Sigmoid colon (tissue), 7 donors: ENCODE measurements at regions of chr10 and their contacts with region 1.

Region 1: DNA sequence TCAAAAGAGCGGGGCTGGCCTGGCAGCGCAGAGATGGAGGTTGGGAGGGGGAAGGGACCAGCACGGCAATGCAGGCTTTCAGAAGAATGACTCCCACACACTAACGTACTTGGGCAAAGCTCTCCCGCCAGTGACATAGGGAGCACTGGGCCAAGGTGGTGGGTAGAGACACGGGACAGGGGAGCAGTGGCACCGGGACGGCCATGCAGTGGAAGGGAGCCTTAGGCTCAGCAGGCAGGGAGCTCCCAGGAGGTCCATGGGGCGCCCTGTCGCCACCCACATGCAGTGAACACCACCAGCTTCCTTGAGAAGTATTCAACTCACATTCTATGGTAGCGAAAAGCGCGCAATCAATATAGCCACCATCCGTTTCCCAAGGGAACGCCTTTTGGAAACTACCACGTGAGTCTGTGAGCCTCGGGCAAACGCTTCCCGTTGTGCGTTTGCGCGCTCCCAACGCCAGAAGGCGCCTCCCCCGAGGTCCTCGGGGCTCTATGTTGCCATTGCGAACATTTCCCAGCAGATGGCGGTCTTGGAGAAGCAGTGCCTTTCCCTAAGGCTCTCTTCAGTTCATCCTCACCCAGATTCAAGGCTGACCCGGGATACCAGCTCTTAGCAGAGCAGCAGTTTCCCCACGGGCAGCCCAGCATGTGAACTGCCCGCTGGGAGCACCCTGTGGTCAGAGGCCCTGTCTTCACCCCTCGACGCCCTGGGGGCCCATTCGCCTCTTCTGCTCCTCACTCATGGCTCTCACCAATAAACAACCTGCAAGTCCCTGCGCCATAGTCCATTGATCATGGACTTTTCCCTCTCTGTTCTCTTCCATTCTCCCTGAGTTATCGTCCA is 16.4 kb upstream of the OPALIN start:
- DNase-seq: peak; percentile 93
- H3K4me3 ChIP-seq: peak overlapping the region; percentile 21 to 46 (median 43)
- H3K27ac ChIP-seq: no peak overlapping the region
- H3K4me1 ChIP-seq: peaks cover 0 to 52% (median 48%) of the 10 kb centered on the region in 4 donors
- H3K27me3 ChIP-seq: no peaks in the 10 kb centered on the region
- CTCF ChIP-seq: peak; percentile 92 to 99 (median 96)
- EP300 ChIP-seq: no peak
- POLR2A ChIP-seq: no peak

Region 2: GRCh38 chr10:95588025-95588424 is 787.2 kb before region 1 on chr10:
- intact Hi-C with region 1: no loop called
- DNase-seq: no peak
- H3K4me3 ChIP-seq: no peak overlapping the region
- H3K27ac ChIP-seq: no peak overlapping the region
- H3K4me1 ChIP-seq: no peaks in the 10 kb centered on the region
- H3K27me3 ChIP-seq: no peaks in the 10 kb centered on the region
- CTCF ChIP-seq: no peak
- EP300 ChIP-seq: no peak
- POLR2A ChIP-seq: no peak

Region 3: DNA sequence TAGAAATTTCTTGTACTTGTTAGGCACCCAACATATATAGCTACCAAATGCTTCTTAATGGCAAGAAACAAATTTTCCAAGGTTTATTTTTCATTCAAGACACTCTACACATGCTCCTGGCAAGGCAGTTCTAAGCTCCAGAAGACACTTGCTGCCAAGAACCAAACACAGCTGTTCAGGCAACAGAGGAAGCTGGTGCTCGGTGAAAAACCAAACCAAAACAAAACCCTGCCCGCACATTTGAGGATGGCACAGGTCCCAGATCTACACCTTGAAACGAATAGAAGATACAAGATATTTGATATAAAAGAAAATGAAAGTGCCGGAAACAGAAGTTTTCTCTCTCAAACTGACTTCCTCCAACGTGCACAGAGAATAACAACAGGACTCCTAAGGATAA is 75.8 kb before region 1 on chr10:
- intact Hi-C with region 1: no loop called
- DNase-seq: no peak
- H3K4me3 ChIP-seq: no peak overlapping the region
- H3K27ac ChIP-seq: no peak overlapping the region
- H3K4me1 ChIP-seq: no peaks in the 10 kb centered on the region
- H3K27me3 ChIP-seq: no peaks in the 10 kb centered on the region
- CTCF ChIP-seq: no peak
- EP300 ChIP-seq: no peak
- POLR2A ChIP-seq: no peak

Region 4: DNA sequence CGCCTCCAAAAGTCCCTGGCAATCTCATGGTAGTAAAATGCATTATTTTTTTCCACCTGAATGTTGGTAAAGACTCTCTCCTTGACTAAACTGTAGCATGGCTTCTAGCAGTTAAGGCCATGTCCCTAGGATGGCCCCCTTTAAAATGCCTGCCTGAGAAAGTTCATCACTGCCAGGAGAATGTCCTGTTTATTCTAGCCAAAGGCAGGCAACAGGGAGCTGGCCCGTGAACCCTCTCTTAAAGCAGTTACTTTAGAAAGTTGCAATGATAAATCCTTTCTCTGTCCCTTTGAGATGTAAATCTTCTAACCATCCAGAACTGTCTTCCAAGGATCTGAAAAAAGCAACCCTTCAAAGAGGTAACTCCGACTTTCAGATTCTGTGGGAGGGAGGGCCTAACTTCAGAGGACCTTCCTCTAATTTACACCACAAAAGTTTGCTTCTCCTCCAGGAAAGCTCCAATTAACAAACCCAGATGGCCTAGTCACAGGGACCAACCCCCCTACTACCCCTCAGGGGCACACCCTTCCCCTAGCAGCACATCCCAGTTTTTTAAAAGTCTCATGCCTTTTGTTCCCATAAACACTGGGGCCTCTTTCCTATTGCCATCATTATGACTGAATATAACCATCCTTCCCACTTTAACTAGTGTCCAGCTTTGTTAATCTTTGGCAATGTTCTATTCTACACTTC is 65.4 kb before region 1 on chr10:
- intact Hi-C with region 1: no loop called
- DNase-seq: no peak
- H3K4me3 ChIP-seq: no peak overlapping the region
- H3K27ac ChIP-seq: peak overlapping the region in 3 of 4 donors; percentile 19 to 64 (median 64)
- H3K4me1 ChIP-seq: peaks cover 0 to 22% (median 18%) of the 10 kb centered on the region in 4 donors
- H3K27me3 ChIP-seq: no peaks in the 10 kb centered on the region
- CTCF ChIP-seq: no peak
- EP300 ChIP-seq: no peak
- POLR2A ChIP-seq: no peak

Region 5: DNA sequence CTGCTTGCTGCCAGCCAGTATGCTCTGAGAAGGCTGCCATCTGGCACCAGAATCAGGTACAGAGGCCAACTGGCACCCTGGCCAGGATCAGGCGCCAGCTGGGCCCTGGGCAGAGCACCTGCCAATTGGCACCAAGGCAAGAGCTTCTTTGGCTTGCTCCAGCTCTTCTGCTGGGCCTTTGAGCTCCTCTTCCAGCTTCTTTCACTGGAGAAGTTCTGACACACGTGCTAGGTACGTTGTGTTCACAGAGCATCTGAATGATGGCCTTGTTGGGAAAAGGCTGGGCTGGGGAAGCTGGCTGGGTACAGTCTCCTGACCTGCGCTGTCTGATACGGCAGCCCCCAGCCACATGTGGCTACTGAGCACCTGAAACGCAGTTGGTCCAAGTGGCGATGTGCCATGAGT is 15.3 kb after region 1 on chr10:
- intact Hi-C with region 1: loop called (anchors 1 kb)
- DNase-seq: peak; percentile 96
- H3K4me3 ChIP-seq: no peak overlapping the region
- H3K27ac ChIP-seq: peak overlapping the region in 3 of 4 donors; percentile 73 to 75 (median 73)
- H3K4me1 ChIP-seq: peaks cover 0 to 40% (median 35%) of the 10 kb centered on the region in 4 donors
- H3K27me3 ChIP-seq: peaks cover 0 to 2% (median 0%) of the 10 kb centered on the region in 3 donors
- CTCF ChIP-seq: no peak
- EP300 ChIP-seq: peak; percentile 62 to 85 (median 73)
- POLR2A ChIP-seq: no peak

Region 6: DNA sequence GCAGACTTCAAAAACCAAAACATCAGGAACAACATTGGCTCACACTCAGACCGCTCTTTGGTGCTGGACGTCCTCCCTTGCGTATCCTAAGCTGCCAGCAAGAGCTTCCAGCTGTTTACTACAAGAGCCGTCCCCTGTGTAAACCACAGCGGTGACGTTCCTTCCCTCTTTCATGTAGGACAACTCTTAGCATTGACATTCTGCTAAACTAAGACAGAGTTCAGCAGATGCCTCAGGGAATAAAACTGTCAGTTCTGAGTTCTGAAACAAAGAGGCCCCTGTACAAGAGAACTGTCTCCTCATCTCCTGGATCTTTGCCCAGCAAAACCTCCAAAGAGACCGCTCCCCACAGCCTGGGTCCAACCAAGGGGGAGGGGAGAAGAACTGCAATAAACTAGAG is 41.4 kb after region 1 on chr10:
- intact Hi-C with region 1: loop called (anchors 2 kb)
- DNase-seq: peak; percentile 90
- H3K4me3 ChIP-seq: no peak overlapping the region
- H3K27ac ChIP-seq: peak overlapping the region in 1 of 4 donors; percentile 44
- H3K4me1 ChIP-seq: peaks cover 0 to 27% (median 18%) of the 10 kb centered on the region in 4 donors
- H3K27me3 ChIP-seq: no peaks in the 10 kb centered on the region
- CTCF ChIP-seq: no peak
- EP300 ChIP-seq: no peak
- POLR2A ChIP-seq: no peak

Region 7: GRCh38 chr10:96586419-96587263 is 211.4 kb after region 1 on chr10 and contains the start of gene TM9SF3:
- intact Hi-C with region 1: loop called (anchors 10 kb)
- DNase-seq: peak; percentile 96
- H3K4me3 ChIP-seq: peak within 1 kb of the TSS; percentile 76 to 95 (median 83)
- H3K27ac ChIP-seq: peak within 1 kb of the TSS; percentile 96 to 99 (median 96)
- H3K4me1 ChIP-seq: peaks cover 0 to 57% (median 53%) of the 10 kb centered on the region in 4 donors
- H3K27me3 ChIP-seq: no peaks in the 10 kb centered on the region
- CTCF ChIP-seq: no peak
- EP300 ChIP-seq: no peak
- POLR2A ChIP-seq: peak in 1 of 2 donors; percentile 16
- total RNA-seq, gene TM9SF3: 104 to 115 (median 108) TPM

Region 8: DNA sequence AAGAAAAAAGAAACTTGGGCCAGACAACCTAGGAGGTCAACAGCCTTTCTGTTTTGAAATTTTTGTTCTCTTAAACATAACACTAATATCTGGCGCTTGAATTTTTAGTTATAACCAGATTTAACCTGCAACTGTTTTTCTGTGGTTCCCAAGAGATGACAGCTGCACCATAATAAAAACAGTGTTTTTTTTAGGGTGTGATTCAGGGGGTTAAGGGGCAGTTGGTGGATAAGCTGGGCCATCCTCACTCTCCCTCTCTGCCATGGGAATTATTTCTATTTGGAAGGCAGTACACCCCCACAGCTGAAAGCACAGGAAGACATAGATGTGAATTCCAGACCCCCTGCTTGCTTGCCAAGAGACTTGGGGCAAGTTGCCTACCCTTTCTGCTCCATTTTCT is 231.7 kb after region 1 on chr10:
- intact Hi-C with region 1: no loop called
- DNase-seq: no peak
- H3K4me3 ChIP-seq: no peak overlapping the region
- H3K27ac ChIP-seq: no peak overlapping the region
- H3K4me1 ChIP-seq: no peaks in the 10 kb centered on the region
- H3K27me3 ChIP-seq: no peaks in the 10 kb centered on the region
- CTCF ChIP-seq: no peak
- EP300 ChIP-seq: no peak
- POLR2A ChIP-seq: no peak

Region 9: DNA sequence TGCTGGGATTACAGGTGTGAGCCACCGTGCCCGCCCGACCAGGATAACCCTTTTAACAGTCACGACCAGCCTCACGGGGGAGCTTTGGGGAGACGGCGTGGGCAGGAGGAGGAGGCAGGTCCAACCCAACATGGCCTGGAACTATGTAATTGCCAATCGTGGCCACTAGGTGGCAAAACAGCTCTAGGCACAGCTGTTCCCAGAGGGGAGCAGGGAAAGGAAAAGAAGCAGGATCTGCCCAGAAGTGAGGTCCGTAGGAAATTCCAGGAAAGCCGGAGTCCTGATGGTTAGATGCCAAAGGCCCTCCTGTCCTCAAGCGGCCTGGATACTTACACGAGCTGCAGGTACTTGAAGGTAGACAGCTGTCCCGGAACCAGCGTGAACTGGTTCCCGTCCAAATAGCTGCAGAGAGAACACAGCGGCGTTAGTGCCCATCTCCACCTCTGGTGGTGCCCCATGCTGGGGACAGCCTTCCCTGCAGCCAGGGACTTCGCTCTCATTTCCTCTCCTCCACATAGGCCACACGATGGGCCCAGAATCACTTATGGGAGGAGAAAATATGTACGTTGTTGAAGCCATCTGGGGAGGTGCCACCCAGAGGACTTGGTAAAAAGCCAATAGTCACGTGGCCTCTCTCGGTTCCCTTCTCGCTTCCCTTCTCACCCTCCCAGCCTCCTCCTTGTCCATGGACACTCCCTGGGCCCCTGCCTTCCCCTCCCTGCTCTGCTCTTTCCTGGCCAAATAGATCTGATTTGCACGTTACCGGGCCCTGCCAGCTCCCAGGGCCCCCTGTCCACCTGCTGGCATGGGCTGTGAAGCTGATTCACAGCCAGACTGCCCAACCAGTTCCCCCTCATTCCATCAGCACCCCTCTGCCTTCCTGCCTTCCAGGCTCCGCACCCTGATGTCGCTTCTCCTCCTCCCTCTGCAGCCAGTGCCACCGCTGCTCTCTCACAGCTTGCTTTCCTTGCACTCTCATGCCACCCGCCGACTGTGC is 662.5 kb after region 1 on chr10:
- intact Hi-C with region 1: loop called (anchors 5 kb)
- DNase-seq: peak; percentile 88
- H3K4me3 ChIP-seq: peak overlapping the region in 3 of 4 donors; percentile 27 to 49 (median 48)
- H3K27ac ChIP-seq: peak overlapping the region in 2 of 4 donors; percentile 10 to 39
- H3K4me1 ChIP-seq: peaks cover 0 to 12% (median 9%) of the 10 kb centered on the region in 4 donors
- H3K27me3 ChIP-seq: no peaks in the 10 kb centered on the region
- CTCF ChIP-seq: peak; percentile 73 to 86 (median 80)
- EP300 ChIP-seq: no peak
- POLR2A ChIP-seq: no peak